Activated CD4-positive, alpha-beta memory T cell treated with anti-CD3 and anti-CD28 coated beads, Interleukin-2, amount 10 ng/mL, durations not matched to agents 7 days and 5 days (primary cell): ENCODE measurements at regions of chr9 and their contacts with region 1.

Region 1: DNA sequence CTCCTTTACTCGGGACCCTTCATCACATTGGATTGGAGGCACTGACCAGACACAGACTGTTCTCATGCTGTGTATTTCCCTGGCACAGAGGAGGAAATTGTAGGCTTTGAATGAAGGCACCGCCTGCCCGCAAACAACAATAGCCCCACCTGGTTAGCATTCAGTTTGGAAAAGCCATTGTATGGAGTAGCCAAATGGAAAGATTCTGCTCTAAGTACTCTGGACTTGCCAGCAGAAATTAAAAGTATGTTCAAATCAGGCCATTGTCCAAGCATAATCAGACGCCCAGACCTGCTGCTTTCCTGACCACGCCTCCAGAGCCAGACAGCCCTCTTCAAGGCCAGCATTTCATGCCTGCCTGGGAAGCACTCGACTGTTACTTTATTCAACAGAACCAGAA is 8.0 kb upstream of the SEMA4D start:
- DNase-seq: no peak
- H3K4me3 Mint-ChIP-seq: no peak overlapping the region
- H3K27ac Mint-ChIP-seq: no peak overlapping the region
- H3K4me1 Mint-ChIP-seq: peaks cover 76% of the 10 kb centered on the region
- H3K27me3 Mint-ChIP-seq: no peaks in the 10 kb centered on the region

Region 2: GRCh38 chr9:89310475-89311346 is 195.2 kb before region 1 on chr9 and contains the start of gene CKS2:
- CTCF ChIA-PET with region 1: no interaction called
- POLR2A ChIA-PET with region 1: interaction called, 10 read pairs
- DNase-seq: peak; percentile 100
- H3K4me3 Mint-ChIP-seq: peak within 1 kb of the TSS; percentile 95
- H3K27ac Mint-ChIP-seq: peak within 1 kb of the TSS; percentile 98
- H3K4me1 Mint-ChIP-seq: peaks cover 47% of the 10 kb centered on the region
- H3K27me3 Mint-ChIP-seq: no peaks in the 10 kb centered on the region
- total RNA-seq, gene CKS2: 175 to 180 TPM

Region 3: GRCh38 chr9:89418882-89419640 is 86.8 kb before region 1 on chr9:
- CTCF ChIA-PET with region 1: interaction called, 4 read pairs
- POLR2A ChIA-PET with region 1: interaction called, 11 read pairs
- DNase-seq: peak; percentile 87
- H3K4me3 Mint-ChIP-seq: peak overlapping the region; percentile 78
- H3K27ac Mint-ChIP-seq: peak overlapping the region; percentile 97
- H3K4me1 Mint-ChIP-seq: peaks cover 99% of the 10 kb centered on the region
- H3K27me3 Mint-ChIP-seq: no peaks in the 10 kb centered on the region

Region 4: DNA sequence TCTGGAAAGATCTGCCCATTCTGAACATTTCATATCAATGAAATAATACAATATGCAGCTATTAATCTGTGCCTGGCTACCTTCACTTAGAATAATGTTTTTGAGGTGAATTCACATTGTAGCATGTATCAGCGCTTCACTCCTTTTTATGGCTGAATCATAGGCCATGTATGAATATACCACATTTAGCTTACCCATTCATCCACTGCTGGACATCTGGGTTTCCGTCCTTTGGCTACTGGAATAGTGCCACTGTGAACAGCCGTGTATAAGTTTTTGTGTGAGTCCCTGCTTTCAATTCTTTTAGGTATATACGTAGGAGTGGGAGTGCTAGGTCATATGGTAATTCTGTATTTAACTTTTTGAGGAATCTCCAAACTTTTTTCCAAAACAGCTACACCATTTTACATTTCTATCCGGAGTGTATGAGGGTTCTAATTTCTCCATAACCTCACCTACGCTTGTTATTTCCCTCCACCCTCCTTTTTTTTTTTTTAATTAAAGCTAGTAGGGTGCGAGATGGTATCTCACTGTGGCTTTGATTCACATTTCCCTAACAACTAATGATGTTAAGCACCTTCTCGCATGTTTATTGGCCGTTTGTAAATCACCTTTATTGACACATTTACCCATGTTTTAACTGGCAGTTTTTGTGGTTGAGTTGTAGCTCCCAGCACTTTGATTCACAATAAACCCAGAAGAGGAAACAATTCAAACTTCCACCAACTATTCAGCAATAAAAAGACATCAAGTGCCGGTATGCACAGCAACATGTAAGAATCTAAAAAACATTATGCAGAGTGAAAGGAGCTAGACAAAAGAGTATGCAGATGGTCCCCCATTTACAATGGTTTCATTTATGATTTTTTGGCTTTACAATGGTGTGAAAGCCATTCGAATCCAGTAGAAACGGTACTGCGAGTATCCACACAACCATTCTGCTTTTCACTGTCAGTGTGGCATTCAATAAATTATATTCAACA is 16.1 kb before region 1 on chr9:
- CTCF ChIA-PET with region 1: interaction called, 3 read pairs
- POLR2A ChIA-PET with region 1: interaction called, 13 read pairs
- DNase-seq: no peak
- H3K4me3 Mint-ChIP-seq: peak overlapping the region; percentile 61
- H3K27ac Mint-ChIP-seq: peak overlapping the region; percentile 87
- H3K4me1 Mint-ChIP-seq: peaks cover 95% of the 10 kb centered on the region
- H3K27me3 Mint-ChIP-seq: no peaks in the 10 kb centered on the region

Region 5: GRCh38 chr9:89536145-89536574 is 30.2 kb after region 1 on chr9:
- CTCF ChIA-PET with region 1: no interaction called
- POLR2A ChIA-PET with region 1: interaction called, 10 read pairs
- DNase-seq: peak; percentile 24
- H3K4me3 Mint-ChIP-seq: peak overlapping the region; percentile 53
- H3K27ac Mint-ChIP-seq: peak overlapping the region; percentile 90
- H3K4me1 Mint-ChIP-seq: peaks cover 81% of the 10 kb centered on the region
- H3K27me3 Mint-ChIP-seq: no peaks in the 10 kb centered on the region